AG04450 (cell line): ENCODE measurements at regions of chr11 and their contacts with region 1.

Region 1: DNA sequence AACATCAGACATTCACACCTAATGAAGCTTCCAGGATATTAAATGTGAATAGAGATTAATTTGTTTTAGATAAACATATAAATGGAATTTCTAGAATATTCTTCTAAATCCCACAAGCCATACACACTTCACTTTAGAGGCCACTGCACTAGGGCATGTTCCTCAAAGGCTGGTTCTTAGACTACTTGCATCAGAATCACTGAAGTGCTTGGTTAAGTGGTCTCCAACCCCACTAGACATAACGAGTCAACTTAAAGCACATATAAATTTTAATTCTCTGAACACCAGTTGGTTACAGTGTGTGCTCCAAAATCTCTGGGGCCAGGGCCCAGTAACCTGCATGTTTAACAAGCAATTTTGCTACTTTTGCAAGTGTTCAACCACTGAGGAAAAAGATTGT is 7.9 kb upstream of the ALKBH8 start:
- DNase-seq: no peak
- H3K4me3 ChIP-seq: no peak overlapping the region
- H3K27ac ChIP-seq: no peak overlapping the region
- H3K27me3 ChIP-seq: peaks cover 7% of the 10 kb centered on the region
- CTCF ChIP-seq: no peak

Region 2: GRCh38 chr11:107263844-107264563 is 309.4 kb before region 1 on chr11:
- CTCF ChIA-PET with region 1: no interaction called
- POLR2A ChIA-PET with region 1: no interaction called
- DNase-seq: no peak
- H3K4me3 ChIP-seq: no peak overlapping the region
- H3K27ac ChIP-seq: no peak overlapping the region
- H3K27me3 ChIP-seq: no peaks in the 10 kb centered on the region
- CTCF ChIP-seq: no peak

Region 3: DNA sequence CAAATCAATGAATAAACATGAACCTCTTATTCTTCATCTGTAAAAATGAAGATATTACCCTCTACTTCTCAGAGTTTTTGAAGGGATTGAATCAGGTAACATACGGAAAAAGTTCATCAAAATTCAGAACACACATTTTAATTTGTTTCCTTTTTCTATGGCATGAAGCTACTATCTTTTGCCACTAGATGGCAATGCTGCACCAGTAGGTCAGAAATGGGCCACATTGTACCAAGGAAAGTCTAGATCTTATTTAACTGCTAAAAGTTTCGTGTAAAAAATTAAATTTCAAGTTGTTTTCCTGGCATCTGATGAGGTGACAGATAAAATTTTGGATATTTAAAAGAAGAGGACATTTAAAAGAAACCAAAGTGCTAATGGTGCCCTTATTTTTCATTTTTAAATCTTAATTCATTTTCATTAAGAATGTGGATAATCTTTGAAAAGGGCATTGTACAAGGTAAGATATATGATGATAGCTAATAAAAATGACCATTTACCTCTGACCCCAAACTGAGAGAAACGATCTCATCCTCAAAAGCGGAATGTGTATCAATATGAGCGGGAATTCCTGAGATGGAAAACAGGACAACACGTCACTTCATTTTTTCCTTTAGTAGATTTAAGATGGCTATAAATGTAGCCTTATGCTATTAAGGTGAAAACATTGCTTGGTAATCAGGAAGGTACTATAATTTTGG is 24.0 kb before region 1 on chr11:
- CTCF ChIA-PET with region 1: interaction called, 20 read pairs
- POLR2A ChIA-PET with region 1: no interaction called
- DNase-seq: no peak
- H3K4me3 ChIP-seq: no peak overlapping the region
- H3K27ac ChIP-seq: no peak overlapping the region
- H3K27me3 ChIP-seq: no peaks in the 10 kb centered on the region
- CTCF ChIP-seq: peak; percentile 93

Region 4: GRCh38 chr11:107587306-107587979 is 14.0 kb after region 1 on chr11:
- CTCF ChIA-PET with region 1: interaction called, 19 read pairs
- POLR2A ChIA-PET with region 1: no interaction called
- DNase-seq: no peak
- H3K4me3 ChIP-seq: no peak overlapping the region
- H3K27ac ChIP-seq: no peak overlapping the region
- H3K27me3 ChIP-seq: peaks cover 26% of the 10 kb centered on the region
- CTCF ChIP-seq: no peak

Region 5: GRCh38 chr11:107682171-107682570 is 108.7 kb after region 1 on chr11:
- CTCF ChIA-PET with region 1: interaction called, 197 read pairs
- POLR2A ChIA-PET with region 1: no interaction called
- DNase-seq: no peak
- H3K4me3 ChIP-seq: no peak overlapping the region
- H3K27ac ChIP-seq: no peak overlapping the region
- H3K27me3 ChIP-seq: peaks cover 3% of the 10 kb centered on the region
- CTCF ChIP-seq: no peak

Region 6: GRCh38 chr11:107713009-107713408 is 139.6 kb after region 1 on chr11:
- CTCF ChIA-PET with region 1: no interaction called
- POLR2A ChIA-PET with region 1: no interaction called
- DNase-seq: no peak
- H3K4me3 ChIP-seq: no peak overlapping the region
- H3K27ac ChIP-seq: no peak overlapping the region
- H3K27me3 ChIP-seq: peaks cover 2% of the 10 kb centered on the region
- CTCF ChIP-seq: no peak